HEK293 (cell line): ENCODE measurements at regions of chr15 and their contacts with region 1.

Region 1: GRCh38 chr15:72722071-72722696 is 36.2 kb downstream of the BBS4 start:
- H3K4me3 ChIP-seq: no peak overlapping the region
- H3K27ac ChIP-seq: no peak overlapping the region
- H3K4me1 ChIP-seq: no peaks in the 10 kb centered on the region
- CTCF ChIP-seq: peak; percentile 69

Region 2: DNA sequence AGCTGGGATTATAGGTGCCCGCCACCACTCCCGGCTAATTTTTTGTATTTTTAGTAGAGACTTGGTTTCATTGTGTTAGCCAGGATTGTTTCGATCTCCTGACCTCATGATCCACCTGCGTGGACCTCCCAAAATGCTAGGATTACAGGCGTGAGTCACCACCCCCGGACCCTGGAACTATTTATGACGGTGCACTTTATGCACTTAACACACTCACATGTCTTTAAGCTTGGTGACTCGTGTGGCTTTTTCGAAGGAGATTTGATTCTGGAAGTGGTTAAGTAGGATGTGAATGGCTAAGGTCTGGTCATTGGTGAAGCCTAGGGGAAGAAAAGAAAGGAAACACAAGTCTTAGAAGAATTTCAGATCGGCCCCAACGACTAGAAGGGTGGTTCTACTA is 15.9 kb before region 1 on chr15:
- CTCF ChIA-PET with region 1: interaction called, 36 read pairs
- POLR2A ChIA-PET with region 1: no interaction called
- H3K4me3 ChIP-seq: no peak overlapping the region
- H3K27ac ChIP-seq: no peak overlapping the region
- H3K4me1 ChIP-seq: no peaks in the 10 kb centered on the region
- CTCF ChIP-seq: no peak

Region 3: GRCh38 chr15:72740219-72740618 is 18.0 kb after region 1 on chr15:
- CTCF ChIA-PET with region 1: interaction called, 73 read pairs
- POLR2A ChIA-PET with region 1: interaction called, 3 read pairs
- H3K4me3 ChIP-seq: no peak overlapping the region
- H3K27ac ChIP-seq: no peak overlapping the region
- H3K4me1 ChIP-seq: no peaks in the 10 kb centered on the region
- CTCF ChIP-seq: no peak

Region 4: GRCh38 chr15:72766025-72766424 is 43.8 kb after region 1 on chr15:
- CTCF ChIA-PET with region 1: interaction called, 11 read pairs
- POLR2A ChIA-PET with region 1: no interaction called
- H3K4me3 ChIP-seq: no peak overlapping the region
- H3K27ac ChIP-seq: no peak overlapping the region
- H3K4me1 ChIP-seq: no peaks in the 10 kb centered on the region
- CTCF ChIP-seq: no peak

Region 5: GRCh38 chr15:73240866-73241499 is 518.8 kb after region 1 on chr15:
- CTCF ChIA-PET with region 1: interaction called, 11 read pairs
- POLR2A ChIA-PET with region 1: no interaction called
- H3K4me3 ChIP-seq: no peak overlapping the region
- H3K27ac ChIP-seq: no peak overlapping the region
- H3K4me1 ChIP-seq: no peaks in the 10 kb centered on the region
- CTCF ChIP-seq: peak; percentile 69